ENCODE measurements at regions of chr7 and their contacts with region 1.

Region 1: GRCh38 chr7:5396999-5397663 is 26.5 kb downstream of the TNRC18 start:
- DNase-seq: peak; percentile 95
- H3K4me3 Mint-ChIP-seq: peak overlapping the region; percentile 80
- H3K27ac Mint-ChIP-seq: peak overlapping the region; percentile 96
- H3K4me1 Mint-ChIP-seq: peaks cover 35% of the 10 kb centered on the region
- H3K27me3 Mint-ChIP-seq: no peaks in the 10 kb centered on the region

Region 2: DNA sequence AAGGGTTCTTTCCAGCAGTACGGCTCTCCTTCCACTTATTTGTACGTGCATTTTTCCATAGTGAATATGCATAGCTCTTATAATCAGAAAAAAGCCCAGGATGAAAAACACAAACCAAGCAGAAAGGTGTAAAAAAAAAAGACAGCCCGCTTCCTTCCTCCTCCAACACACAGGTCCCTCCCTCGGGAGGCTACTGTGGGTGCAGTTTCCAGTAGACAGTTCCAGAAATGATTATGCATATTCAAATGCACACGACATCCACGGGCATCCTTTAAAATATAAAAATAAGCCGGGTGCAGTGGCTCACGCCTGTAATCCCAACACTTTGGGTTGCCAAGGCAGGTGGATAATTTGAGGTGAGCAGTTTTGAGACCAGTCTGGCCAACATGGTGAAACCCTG is 33.4 kb before region 1 on chr7:
- CTCF ChIA-PET with region 1: interaction called, 29 read pairs
- POLR2A ChIA-PET with region 1: interaction called, 4 read pairs
- intact Hi-C with region 1: loop called (anchors 2 kb)
- DNase-seq: peak; percentile 60
- H3K4me3 Mint-ChIP-seq: no peak overlapping the region
- H3K27ac Mint-ChIP-seq: peak overlapping the region; percentile 28
- H3K4me1 Mint-ChIP-seq: peaks cover 10% of the 10 kb centered on the region
- H3K27me3 Mint-ChIP-seq: no peaks in the 10 kb centered on the region

Region 3: GRCh38 chr7:5423844-5424688 is 26.9 kb after region 1 on chr7:
- CTCF ChIA-PET with region 1: interaction called, 10 read pairs
- POLR2A ChIA-PET with region 1: interaction called, 7 read pairs
- intact Hi-C with region 1: loop called (anchors 2 kb)
- DNase-seq: peak; percentile 70
- H3K4me3 Mint-ChIP-seq: peak overlapping the region; percentile 65
- H3K27ac Mint-ChIP-seq: no peak overlapping the region
- H3K4me1 Mint-ChIP-seq: peaks cover 44% of the 10 kb centered on the region
- H3K27me3 Mint-ChIP-seq: peaks cover 52% of the 10 kb centered on the region

Region 4: DNA sequence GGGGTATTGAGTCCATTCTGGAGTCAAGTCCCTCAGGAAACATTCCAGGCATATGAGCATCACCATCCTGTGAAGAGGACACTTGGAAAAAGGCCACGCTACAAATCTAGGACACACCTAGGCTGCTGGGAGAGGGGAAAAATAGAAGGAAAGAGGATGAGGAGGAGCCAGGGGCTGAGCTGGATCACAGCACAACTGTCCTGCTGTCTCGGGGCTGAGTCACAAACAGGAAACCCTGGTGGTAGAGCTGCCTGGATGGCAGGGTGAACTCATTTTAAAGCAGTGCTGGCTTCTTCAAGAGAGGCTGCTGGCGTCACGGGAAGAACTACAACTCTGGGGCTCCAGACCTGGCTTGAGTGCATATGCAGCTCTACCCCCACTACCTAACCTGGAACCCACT is 232.8 kb after region 1 on chr7:
- CTCF ChIA-PET with region 1: no interaction called
- POLR2A ChIA-PET with region 1: no interaction called
- intact Hi-C with region 1: loop called (anchors 1 kb)
- DNase-seq: peak; percentile 72
- H3K4me3 Mint-ChIP-seq: no peak overlapping the region
- H3K27ac Mint-ChIP-seq: peak overlapping the region; percentile 76
- H3K4me1 Mint-ChIP-seq: peaks cover 31% of the 10 kb centered on the region
- H3K27me3 Mint-ChIP-seq: no peaks in the 10 kb centered on the region

Measured in activated CD4-positive, alpha-beta memory T cell treated with anti-CD3 and anti-CD28 coated beads for 36 hours (primary cell).